BJ (cell line): ENCODE measurements at regions of chr20 and their contacts with region 1.

Region 1: GRCh38 chr20:36754656-36755222 is 8.8 kb upstream of the NDRG3 start:
- DNase-seq: peak; percentile 16
- H3K4me3 ChIP-seq: no peak overlapping the region
- H3K27me3 ChIP-seq: no peaks in the 10 kb centered on the region
- CTCF ChIP-seq: peak; percentile 83

Region 2: GRCh38 chr20:36613974-36614373 is 140.8 kb before region 1 on chr20:
- CTCF ChIA-PET with region 1: interaction called, 15 read pairs
- POLR2A ChIA-PET with region 1: no interaction called
- DNase-seq: no peak
- H3K4me3 ChIP-seq: no peak overlapping the region
- H3K27me3 ChIP-seq: no peaks in the 10 kb centered on the region
- CTCF ChIP-seq: no peak

Region 3: GRCh38 chr20:36732456-36732855 is 22.3 kb before region 1 on chr20:
- CTCF ChIA-PET with region 1: interaction called, 12 read pairs
- POLR2A ChIA-PET with region 1: no interaction called
- DNase-seq: no peak
- H3K4me3 ChIP-seq: no peak overlapping the region
- H3K27me3 ChIP-seq: no peaks in the 10 kb centered on the region
- CTCF ChIP-seq: no peak

Region 4: DNA sequence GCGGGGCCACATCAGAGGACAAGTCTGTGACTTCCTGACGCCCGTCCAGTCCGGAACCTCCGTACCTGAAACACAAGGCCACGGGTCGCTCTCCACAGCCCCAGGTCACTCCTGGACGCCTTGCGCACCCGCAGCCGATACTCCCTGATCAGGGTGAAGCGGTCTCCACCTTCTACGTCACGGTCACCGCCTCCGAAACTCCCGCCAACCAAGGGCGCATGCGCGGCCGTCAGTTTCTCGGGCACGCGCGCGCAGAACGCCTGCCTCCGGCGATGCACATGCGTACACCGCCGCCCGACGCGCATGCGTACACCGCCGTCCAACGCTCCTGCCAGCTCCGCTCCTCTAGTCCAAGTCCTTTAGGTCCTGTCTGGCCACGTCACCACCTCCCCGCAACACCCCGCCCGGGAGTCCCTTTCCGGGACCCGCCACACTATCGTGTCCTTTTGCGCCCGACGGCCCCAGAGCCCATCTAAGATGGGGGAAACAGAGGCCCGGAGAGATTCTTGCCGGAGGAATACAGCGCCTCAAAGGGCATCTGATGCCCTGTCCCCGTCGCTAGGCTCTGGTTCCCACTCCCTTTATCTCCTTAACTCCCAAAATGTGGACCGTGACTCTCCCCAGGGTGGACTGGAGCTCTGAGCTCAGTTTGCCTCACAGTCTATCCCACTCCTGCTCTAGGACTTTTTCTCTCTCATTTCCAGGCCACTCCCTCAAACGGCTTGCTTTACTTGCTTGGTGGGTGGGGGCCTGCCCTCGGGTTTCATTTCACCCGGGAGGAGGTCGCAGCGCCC is 19.1 kb after region 1 on chr20 and contains the start of gene DSN1:
- CTCF ChIA-PET with region 1: interaction called, 32 read pairs
- POLR2A ChIA-PET with region 1: no interaction called
- DNase-seq: peak; percentile 83
- H3K4me3 ChIP-seq: peak within 1 kb of the TSS; percentile 80
- H3K27me3 ChIP-seq: no peaks in the 10 kb centered on the region
- CTCF ChIP-seq: no peak
- polyA plus RNA-seq, gene DSN1: 7.3 and 11.0 TPM in 2 replicates

Region 5: DNA sequence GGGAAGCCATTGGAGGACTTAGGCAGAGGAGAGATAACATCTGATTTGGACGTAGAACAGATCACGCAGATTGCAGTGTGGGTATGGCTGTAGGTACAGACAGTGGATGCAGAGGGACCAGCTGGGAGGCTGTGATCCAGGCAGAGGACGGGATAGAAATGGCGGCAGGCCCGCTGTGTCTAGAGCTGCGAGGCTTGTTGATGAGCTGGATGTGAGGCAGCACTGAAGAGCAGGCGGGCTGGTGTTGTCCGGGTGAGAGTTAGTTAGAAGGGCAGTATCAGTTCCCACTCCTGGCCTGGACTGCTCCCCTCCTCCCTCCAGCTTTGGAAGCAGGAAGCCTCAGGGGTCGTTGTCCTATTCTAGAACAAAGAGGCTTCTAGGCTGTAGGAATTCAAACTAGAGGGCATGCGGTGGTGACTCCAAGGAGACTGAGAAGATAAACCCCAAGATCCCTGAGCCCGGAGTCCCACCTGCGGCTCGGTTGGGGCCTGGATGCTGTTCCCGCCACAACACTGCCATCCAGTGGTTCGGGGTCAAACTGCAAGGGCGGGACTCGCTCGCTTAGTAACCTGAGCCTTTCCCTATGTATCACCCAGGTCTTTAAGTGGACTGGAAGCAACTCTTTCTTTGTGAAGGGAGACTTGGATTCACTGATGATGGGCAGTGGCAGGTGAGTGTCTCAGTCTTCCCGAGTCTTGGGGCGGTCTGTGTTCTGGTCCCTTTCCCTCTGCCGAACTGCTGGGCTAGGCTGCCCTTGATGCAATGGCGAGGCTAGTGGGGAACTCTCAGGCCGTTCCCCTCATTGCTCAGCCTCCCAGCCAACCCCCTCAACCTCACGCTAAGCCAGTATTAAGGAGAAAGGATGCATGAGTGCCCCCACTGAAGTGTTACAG is 132.4 kb after region 1 on chr20:
- CTCF ChIA-PET with region 1: interaction called, 15 read pairs
- POLR2A ChIA-PET with region 1: no interaction called
- DNase-seq: peak; percentile 22
- H3K4me3 ChIP-seq: peak overlapping the region; percentile 18; the same call in 1 of the 2 replicates
- H3K27me3 ChIP-seq: 0 out of 2 replicates have a peak, but pooled peaks cover 1% of the 10 kb centered on the region
- CTCF ChIP-seq: peak; percentile 98